Activated CD4-positive, alpha-beta memory T cell treated with anti-CD3 and anti-CD28 coated beads, Interleukin-2, amount 10 ng/mL, durations not matched to agents 7 days and 5 days (primary cell): ENCODE measurements at regions of chr19 and their contacts with region 1.

Region 1: DNA sequence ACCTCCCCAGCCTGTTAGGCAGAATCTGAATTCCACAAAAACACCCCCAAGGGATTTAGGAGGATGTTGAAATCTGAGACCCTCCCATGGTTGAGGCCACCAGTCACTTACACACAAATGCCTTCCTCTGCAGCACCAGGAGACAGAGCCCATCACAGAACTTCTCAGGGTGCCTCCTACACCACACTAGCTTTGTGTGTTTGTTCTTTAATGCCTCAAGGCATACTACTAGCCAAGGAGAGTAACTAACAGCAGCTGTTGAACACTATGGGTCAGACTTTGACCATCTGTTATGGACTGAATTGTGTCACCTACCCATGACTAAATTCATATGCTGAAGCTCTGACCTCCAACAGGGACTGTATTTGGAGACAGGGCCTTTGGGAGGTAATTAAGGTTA is 9.5 kb upstream of the MED26 start:
- DNase-seq: no peak
- H3K4me3 Mint-ChIP-seq: no peak overlapping the region
- H3K27ac Mint-ChIP-seq: no peak overlapping the region
- H3K4me1 Mint-ChIP-seq: peaks cover 17% of the 10 kb centered on the region
- H3K27me3 Mint-ChIP-seq: no peaks in the 10 kb centered on the region

Region 2: GRCh38 chr19:16572332-16573211 is 65.0 kb before region 1 on chr19 and contains the start of gene SLC35E1:
- CTCF ChIA-PET with region 1: no interaction called
- POLR2A ChIA-PET with region 1: no interaction called
- DNase-seq: peak; percentile 93
- H3K4me3 Mint-ChIP-seq: peak within 1 kb of the TSS; percentile 93
- H3K27ac Mint-ChIP-seq: peak within 1 kb of the TSS; percentile 90
- H3K4me1 Mint-ChIP-seq: peaks cover 68% of the 10 kb centered on the region
- H3K27me3 Mint-ChIP-seq: no peaks in the 10 kb centered on the region
- total RNA-seq, gene SLC35E1: 57.3 to 57.7 TPM

Region 3: DNA sequence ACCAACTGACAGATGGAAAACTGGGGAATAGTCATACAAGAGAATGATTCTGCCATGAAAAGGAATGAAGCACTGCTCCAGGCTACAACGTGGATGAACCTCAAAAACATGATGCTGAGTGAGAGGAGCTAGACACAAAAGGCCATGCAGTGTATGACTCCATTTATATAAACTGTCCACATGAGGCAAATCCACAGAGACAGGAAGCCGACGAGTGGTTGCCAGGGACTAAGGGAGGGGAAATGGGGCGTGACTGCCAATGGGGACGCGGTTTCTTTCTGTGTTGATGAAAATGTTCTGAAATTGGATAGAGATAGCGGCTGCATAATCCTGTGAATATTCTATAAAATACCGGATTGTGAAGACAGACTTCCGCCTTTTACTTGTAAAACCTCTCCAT is 12.2 kb after region 1 on chr19:
- CTCF ChIA-PET with region 1: no interaction called
- POLR2A ChIA-PET with region 1: interaction called, 11 read pairs
- DNase-seq: no peak
- H3K4me3 Mint-ChIP-seq: no peak overlapping the region
- H3K27ac Mint-ChIP-seq: no peak overlapping the region
- H3K4me1 Mint-ChIP-seq: peaks cover 11% of the 10 kb centered on the region
- H3K27me3 Mint-ChIP-seq: no peaks in the 10 kb centered on the region

Region 4: DNA sequence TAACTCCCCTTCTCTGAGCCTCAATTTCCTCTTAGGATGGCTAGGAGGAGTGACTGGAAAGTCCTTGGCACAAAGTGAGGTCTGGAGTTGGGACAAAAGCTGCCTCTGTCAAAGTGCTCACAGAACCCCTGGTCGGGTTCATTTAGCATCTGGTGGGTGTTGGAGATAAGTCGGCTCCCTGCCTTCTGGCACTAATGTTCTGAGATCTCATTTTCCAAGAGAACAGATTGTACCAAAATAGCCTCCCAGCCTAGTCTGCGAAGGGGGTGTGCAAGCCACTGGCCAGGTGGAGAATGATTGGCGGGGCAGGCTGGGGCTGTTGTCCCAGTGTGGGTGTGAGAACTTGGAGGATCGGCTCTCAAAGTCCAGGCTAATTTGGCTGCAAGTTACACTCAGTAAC is 61.4 kb after region 1 on chr19:
- CTCF ChIA-PET with region 1: no interaction called
- POLR2A ChIA-PET with region 1: no interaction called
- DNase-seq: no peak
- H3K4me3 Mint-ChIP-seq: no peak overlapping the region
- H3K27ac Mint-ChIP-seq: no peak overlapping the region
- H3K4me1 Mint-ChIP-seq: no peaks in the 10 kb centered on the region
- H3K27me3 Mint-ChIP-seq: peaks cover 1% of the 10 kb centered on the region